Colonic mucosa (tissue), 4 donors: ENCODE measurements at regions of chr9 and their contacts with region 1.

Region 1: GRCh38 chr9:137227063-137227852 is at the start of gene RNF224:
- DNase-seq: peak; percentile 86
- H3K4me3 ChIP-seq: no peak within 1 kb of the TSS
- H3K27ac ChIP-seq: no peak within 1 kb of the TSS
- H3K4me1 ChIP-seq: peaks cover 29% of the 10 kb centered on the region
- H3K27me3 ChIP-seq: peaks cover 20% of the 10 kb centered on the region
- CTCF ChIP-seq: peak; percentile 91
- total RNA-seq, gene RNF224: not detected

Region 2: GRCh38 chr9:137115392-137116026 is 111.7 kb before region 1 on chr9:
- intact Hi-C with region 1: loop called (anchors 2 kb)
- DNase-seq: no peak
- H3K4me3 ChIP-seq: no peak overlapping the region
- H3K27ac ChIP-seq: no peak overlapping the region
- H3K4me1 ChIP-seq: no peaks in the 10 kb centered on the region
- H3K27me3 ChIP-seq: peaks cover 4% of the 10 kb centered on the region
- CTCF ChIP-seq: no peak

Region 3: DNA sequence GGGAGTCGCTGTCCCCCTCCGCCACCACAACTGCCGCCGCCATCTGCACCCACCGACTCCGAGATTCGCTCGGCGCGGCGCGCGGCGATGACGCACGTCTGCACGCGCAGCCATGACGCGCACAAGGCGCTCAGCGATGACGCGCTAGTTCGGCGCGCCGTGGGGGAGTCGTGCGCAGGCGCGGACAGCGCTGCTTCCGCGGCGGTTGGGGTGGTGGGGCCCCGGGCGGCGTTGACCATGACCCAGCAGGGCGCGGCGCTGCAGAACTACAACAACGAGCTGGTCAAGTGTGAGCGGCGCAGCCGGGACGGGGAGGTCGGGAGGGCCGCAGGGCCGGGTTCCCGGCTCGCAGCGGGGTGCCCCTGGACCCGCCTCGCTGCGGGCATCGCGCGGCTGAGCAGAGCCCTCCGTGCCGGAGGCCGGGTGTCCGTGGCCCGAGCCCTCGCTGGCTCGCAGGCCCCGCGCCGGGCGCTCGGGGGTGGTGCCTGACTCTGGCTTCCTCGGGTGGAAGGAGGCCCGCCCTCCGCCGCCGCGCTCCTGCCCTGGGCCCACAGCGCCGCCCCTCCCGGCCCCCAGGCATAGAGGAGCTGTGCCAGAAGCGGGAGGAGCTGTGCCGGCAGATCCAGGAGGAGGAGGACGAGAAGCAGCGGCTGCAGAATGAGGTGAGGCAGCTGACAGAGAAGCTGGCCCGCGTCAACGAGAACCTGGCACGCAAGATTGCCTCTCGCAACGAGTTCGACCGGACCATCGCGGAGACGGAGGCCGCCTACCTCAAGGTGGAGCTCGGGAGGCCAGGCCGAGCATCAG is 38.6 kb before region 1 on chr9 and contains the starts of genes ANAPC2 and SSNA1:
- intact Hi-C with region 1: loop called (anchors 5 kb)
- DNase-seq: peak; percentile 93
- H3K4me3 ChIP-seq: peak within 1 kb of the TSS; percentile 99
- H3K27ac ChIP-seq: peak within 1 kb of the TSS; percentile 98
- H3K4me1 ChIP-seq: peaks cover 36% of the 10 kb centered on the region
- H3K27me3 ChIP-seq: no peaks in the 10 kb centered on the region
- CTCF ChIP-seq: peak; percentile 28
- total RNA-seq, gene ANAPC2: 33.8 to 67.8 TPM
- total RNA-seq, gene SSNA1: 60.0 to 100 TPM